Dendritic cell treated with granulocyte-macrophage colony-stimulating factor and Interleukin-4, amounts not matched to agents 40 ng/mL and 50 ng/mL, for 4 days (primary cell): ENCODE measurements at regions of chr17 and their contacts with region 1.

Region 1: GRCh38 chr17:82668631-82669099 is 20.4 kb upstream of the WDR45B start:
- H3K4me3 Mint-ChIP-seq: peak overlapping the region; percentile 10
- H3K27ac Mint-ChIP-seq: no peak overlapping the region
- H3K4me1 Mint-ChIP-seq: peaks cover 8% of the 10 kb centered on the region
- H3K27me3 Mint-ChIP-seq: peaks cover 2% of the 10 kb centered on the region

Region 2: DNA sequence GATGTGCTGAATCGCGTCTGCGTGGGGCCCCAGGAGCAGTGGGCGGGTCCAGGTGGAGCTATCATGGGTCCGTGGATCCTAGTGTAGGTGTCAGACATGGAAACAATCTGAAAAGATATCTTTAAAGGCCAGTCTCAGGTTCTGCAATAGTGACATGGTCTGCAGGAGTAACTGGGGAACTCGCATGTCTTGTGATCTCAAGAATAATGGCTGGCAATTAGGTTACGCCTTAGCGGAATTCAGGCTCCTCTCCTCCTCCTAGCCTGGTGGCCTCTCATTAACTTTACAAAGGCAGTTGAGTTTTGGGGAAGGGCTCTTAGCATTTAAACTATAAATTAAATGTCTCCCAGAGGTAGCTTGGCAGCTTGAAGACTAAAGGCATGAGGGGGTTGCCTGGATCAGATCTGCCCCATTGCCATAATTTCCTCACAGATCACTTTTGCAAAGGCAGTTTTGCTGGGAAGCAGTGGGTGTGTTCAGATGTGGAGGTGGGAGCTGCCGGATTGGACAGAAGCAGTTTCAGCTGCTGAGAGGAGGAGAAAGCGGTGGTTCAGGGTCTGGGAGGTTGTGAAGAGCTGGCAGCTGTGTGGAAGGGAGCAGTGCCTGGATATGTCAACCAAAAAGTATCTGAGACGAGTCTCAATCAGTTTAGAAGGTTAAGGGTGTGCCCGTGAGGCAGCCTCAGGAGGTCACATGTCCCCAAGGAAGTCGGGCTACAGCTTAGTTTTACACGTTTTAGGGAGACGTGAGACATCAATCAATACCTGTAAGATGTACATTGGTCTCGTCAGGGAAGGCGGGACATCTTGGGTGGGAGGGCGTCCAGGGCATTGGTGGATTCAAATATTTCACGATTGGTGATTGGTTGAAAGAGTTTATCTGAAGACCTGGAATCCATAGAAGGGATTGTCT is 85.9 kb after region 1 on chr17:
- intact Hi-C with region 1: no loop called
- H3K4me3 Mint-ChIP-seq: no peak overlapping the region
- H3K27ac Mint-ChIP-seq: no peak overlapping the region
- H3K4me1 Mint-ChIP-seq: peaks cover 34% of the 10 kb centered on the region
- H3K27me3 Mint-ChIP-seq: peaks cover 6% of the 10 kb centered on the region

Region 3: DNA sequence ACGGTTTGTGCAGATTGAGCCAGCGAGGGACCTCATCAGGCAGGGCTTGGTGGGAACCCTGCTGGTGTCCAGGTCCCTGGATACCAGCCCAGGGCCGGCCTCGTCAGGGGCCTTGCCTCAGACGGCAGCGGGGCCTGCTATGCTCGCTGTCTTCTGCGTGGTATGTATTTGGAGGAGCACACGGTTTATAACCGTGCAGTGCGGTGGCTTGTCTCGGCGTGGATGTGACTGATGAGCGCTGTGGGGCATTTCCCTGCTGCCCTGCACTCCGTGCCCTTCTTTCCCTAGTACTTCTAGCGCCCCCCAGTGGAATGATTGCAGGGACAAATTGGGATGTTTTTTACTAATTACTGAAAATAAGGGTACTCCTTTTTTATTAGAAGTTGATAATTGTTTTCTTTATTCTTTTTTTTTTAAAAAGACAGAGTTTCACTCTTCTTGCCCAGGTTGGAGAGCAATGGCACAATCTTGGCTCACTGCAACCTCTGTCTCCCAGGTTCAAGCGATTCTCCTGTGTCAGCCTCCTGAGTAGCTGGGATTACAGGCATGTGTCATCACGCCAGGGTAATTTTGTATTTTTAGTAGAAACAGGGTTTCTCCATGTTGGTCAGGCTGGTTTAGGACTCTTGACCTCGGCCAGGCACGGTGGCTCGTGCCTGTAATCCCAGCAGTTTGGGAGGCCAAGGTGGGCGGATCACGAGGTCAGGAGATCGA is 98.5 kb after region 1 on chr17:
- intact Hi-C with region 1: loop called (anchors 1 kb)
- H3K4me3 Mint-ChIP-seq: no peak overlapping the region
- H3K27ac Mint-ChIP-seq: no peak overlapping the region
- H3K4me1 Mint-ChIP-seq: peaks cover 7% of the 10 kb centered on the region
- H3K27me3 Mint-ChIP-seq: no peaks in the 10 kb centered on the region

Region 4: GRCh38 chr17:82775001-82775823 is 106.5 kb after region 1 on chr17:
- intact Hi-C with region 1: loop called (anchors 2 kb)
- H3K4me3 Mint-ChIP-seq: no peak overlapping the region
- H3K27ac Mint-ChIP-seq: no peak overlapping the region
- H3K4me1 Mint-ChIP-seq: no peaks in the 10 kb centered on the region
- H3K27me3 Mint-ChIP-seq: no peaks in the 10 kb centered on the region